Caco-2 (cell line): ENCODE measurements at regions of chr20 and their contacts with region 1.

Region 1: GRCh38 chr20:2671977-2672376 is 8.0 kb upstream of the IDH3B start:
- DNase-seq: peak in 1 of 2 experiments; percentile 33
- H3K4me3 ChIP-seq: no peak overlapping the region
- H3K4me3 Mint-ChIP-seq: no peak overlapping the region
- H3K27ac Mint-ChIP-seq: no peak overlapping the region
- H3K4me1 ChIP-seq: no peaks in the 10 kb centered on the region
- H3K4me1 Mint-ChIP-seq: no peaks in the 10 kb centered on the region
- H3K27me3 ChIP-seq: no peaks in the 10 kb centered on the region
- H3K27me3 Mint-ChIP-seq: peaks cover 5% of the 10 kb centered on the region
- CTCF ChIP-seq: peak in 1 of 2 experiments; percentile 16

Region 2: DNA sequence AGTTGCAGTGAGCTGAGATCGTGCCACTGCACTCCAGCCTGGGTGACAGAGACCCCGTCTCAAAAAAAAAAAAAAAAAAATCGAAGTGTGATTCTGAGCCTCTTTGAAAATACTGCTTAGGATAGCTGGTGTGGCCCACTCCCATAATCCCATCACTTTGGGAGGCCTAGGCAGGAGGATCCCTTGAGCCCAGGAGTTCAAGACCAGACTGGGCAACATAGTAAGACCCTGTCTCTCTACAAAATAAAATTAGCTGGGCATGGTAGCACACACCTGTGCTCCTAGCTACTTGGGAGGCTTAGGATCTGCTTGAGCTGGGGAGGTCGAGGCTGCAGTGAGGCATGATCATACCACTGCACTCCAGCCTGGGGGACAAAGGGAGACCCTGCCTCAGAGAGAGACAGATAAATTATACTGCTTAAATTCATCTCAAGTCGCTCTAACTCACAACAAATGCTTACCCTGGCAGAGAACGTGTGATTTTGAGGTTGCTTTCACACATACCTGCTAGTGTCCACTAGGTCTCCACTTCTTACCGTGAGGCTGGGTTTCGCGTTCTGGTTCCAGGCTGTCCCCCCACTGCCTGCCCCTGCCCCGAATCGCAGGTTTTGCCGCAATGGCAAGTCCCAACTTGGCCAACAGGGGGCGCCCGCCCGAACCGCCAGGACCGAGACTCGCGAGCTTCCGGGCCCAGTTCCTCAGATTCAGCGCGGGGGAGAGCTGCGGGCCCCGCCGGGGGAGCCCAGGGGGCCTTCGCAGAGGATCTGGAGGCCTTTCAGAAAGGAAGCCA is 147.9 kb before region 1 on chr20:
- CTCF ChIA-PET with region 1: interaction called, 5 read pairs
- POLR2A ChIA-PET with region 1: no interaction called
- intact Hi-C with region 1: loop called (anchors 1 kb)
- DNase-seq: peak; percentile 85 to 94
- H3K4me3 ChIP-seq: peak overlapping the region; percentile 75
- H3K4me3 Mint-ChIP-seq: peak overlapping the region; percentile 89
- H3K27ac Mint-ChIP-seq: peak overlapping the region; percentile 65
- H3K4me1 ChIP-seq: no peaks in the 10 kb centered on the region
- H3K4me1 Mint-ChIP-seq: peaks cover 5% of the 10 kb centered on the region
- H3K27me3 ChIP-seq: no peaks in the 10 kb centered on the region; the same call in 1 of the 2 replicates
- H3K27me3 Mint-ChIP-seq: no peaks in the 10 kb centered on the region
- CTCF ChIP-seq: peak; percentile 94 to 98